BJ (cell line): ENCODE measurements at regions of chr19 and their contacts with region 1.

Region 1: DNA sequence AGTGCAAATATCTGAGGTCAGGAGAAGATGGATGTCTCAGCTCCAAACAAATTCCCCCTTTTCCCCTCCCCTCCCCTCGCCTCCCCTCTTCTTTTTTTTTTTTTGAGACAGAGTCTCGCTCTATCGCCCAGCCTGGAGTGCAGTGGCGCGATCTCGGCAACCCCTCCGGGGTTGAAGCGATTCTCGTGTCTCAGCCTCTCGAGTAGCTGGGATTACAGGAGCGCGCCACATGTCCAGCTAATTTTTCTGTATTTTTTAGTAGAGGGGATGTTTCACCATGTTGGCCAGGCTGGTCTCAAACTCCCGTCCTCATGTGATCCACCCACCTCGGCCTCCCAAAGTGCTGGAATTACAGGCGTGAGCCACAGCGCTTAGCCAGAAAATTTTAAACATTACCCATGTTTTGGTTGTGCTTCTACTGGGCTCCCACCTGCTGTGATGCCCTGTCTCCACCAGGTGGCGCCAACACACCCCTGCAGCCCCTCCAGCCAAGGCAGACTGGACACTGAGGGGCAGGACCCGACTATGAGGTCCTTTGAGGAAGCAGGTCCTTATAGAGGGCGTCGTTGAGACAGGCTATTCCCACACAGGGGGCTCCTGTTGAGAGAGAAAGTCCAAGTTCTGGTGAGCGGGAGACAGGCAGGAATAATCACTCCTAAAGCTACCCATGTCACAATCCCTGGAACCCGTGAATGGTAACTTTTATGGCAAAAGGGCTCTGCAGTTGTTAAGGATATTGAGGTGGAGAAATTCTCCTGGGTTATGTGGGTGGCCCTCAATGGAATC is 6.3 kb downstream of the ERICH4 start:
- DNase-seq: no peak
- H3K4me3 ChIP-seq: peak overlapping the region; percentile 9
- H3K27me3 ChIP-seq: peaks cover 6% of the 10 kb centered on the region; the same call in 1 of the 2 replicates
- CTCF ChIP-seq: peak; percentile 98

Region 2: DNA sequence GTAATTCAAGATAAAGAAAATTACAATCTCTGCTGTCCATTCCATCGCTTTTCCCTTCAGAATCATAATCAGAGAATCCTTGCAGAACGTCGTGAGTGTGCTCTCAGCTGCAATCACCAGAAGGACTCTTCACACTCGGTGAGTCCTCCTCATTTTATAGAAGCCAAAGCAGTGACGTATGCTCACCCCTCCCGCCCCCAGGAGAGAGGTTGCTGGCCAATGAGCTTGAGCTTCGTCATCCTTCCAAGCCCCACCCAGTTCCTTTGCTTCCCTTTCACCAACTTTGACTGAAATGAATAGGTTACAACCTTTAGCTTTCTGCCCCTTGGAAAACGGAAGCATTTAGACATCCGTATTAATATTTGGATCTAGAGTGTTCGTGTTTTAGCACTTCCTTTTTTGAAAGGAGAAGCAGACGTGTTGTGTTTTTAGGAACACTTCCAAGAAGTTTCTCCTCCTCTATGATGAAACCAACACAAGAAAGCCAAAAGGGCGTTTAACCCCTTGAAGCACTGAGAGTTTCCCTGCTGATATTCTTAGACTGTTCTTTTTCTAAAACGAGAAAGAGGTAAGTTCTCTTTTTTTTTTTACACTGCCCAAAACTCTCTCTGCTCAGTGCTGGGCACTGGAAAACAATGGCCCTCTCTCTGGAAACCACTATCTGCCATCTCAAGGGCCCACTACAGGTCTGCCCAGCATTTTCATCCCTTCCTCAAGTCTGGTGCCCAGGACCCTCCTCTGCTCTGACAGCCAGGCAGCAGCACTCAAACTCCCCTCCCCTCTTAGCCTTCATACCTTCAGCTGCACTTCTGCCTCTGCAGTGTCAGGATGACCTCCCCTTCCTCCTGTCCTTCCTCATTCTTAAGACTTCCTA is 82.4 kb after region 1 on chr19:
- CTCF ChIA-PET with region 1: interaction called, 57 read pairs
- POLR2A ChIA-PET with region 1: no interaction called
- DNase-seq: no peak
- H3K4me3 ChIP-seq: no peak overlapping the region
- H3K27me3 ChIP-seq: peaks cover 1% of the 10 kb centered on the region; the same call in 1 of the 2 replicates
- CTCF ChIP-seq: no peak

Region 3: DNA sequence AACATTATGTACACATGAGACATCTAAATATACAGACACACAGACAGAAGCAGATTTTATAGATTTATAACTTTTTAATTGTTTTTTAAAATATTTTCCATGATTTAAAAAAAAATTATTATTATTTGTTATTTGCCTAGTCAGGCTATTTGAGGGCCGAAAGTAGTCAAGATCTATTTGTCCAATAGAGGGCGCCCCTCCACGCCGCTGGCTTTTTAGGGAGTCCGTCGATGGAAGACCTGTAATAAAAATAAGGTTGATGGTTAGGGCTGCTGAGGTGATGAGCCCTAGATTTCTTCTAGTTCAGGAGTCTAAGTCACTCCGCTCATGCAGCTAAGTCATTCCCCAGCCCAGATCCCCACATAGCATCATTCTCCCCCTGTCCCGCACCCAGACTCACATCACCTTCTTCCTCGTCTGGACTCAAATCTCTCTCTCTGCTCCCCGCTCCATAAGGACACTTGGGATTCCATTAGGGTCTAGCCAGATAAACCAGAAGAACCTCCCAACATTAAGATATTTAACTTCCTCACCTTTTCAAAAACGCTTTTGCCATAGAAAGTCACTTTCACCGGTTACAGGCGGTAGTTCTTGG is 92.8 kb after region 1 on chr19:
- CTCF ChIA-PET with region 1: interaction called, 57 read pairs
- POLR2A ChIA-PET with region 1: no interaction called
- DNase-seq: no peak
- H3K4me3 ChIP-seq: no peak overlapping the region
- H3K27me3 ChIP-seq: peaks cover 6% of the 10 kb centered on the region; the same call in 1 of the 2 replicates
- CTCF ChIP-seq: peak; percentile 62